BJ (cell line): ENCODE measurements at regions of chr3 and their contacts with region 1.

Region 1: DNA sequence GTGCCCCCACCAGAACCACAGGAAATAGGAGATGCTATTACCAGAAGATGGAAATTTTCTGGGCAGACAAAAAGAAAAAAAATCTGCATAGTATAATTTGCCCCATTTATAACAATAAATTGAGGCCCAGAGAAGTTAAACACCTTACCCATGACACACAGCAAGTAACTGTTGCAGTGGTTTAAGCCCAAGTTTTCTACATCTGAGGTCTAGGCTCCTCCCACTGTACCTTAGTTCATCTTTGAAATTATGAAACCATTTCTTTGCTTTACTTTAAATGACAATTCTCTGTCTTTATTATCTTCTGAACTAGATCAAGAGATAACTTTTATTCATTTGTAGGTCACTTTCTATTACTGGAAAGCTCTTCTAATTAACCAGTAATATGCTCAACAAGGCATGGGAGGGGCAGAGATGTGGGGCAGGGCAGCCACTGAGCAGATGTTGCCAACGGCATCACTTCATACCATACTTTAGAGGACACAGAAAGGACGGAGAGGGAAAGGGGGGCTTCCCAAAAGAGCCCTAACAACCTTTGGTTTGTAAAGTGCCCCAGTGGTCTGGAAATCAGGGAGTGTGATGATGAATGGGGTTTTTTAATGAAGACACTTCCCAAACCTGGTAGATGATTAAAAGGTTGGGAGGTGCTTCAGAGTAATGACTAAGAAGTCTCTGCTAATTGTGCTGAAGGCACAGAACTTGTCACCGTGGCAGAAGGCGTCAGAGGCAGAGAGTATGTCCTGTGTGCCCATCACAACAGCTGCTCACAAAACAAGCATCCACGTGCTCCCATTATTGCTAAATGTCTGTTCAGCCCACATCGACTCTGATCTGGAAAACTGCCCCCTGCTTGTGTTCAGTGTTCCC is 342.5 kb downstream of the SHQ1 start:
- DNase-seq: no peak
- H3K4me3 ChIP-seq: no peak overlapping the region
- H3K27me3 ChIP-seq: peaks cover 7% of the 10 kb centered on the region
- CTCF ChIP-seq: no peak

Region 2: DNA sequence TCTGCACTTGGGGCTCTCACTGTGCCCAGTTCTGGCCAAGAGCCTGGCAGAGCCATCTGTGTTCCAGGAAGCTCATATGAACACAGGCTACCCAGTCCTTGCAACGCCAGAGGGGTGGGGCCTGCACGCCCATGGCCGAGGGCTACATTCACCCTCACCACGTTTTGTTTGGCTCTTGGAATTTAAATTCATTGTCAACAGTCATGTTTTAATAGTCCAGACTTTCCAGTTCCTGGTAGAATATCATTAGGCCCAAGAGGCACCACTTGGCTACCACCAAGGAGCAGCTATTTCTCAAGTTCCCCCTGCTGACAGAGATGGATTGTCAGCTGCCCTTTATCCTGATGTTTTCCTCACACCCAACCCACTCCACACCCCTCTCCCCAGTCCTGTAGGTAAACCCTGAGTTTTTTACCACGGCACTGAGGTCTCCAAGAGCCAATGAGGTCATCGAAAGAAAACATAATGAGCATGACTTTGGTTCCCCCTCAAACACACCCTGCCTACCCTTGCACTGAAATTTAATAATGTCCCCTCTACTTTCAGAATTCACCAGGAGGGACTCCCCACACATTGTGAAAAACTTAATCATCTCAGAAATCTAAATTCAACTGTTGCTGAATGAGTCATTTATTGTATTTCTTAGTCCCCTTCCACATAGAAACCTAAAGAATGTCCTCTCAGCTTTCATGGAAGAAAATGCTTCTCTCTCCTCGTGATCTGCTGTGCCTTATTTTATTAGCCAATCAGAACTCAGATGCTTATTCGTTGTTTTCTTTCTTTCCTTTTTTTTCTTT is 217.4 kb after region 1 on chr3:
- CTCF ChIA-PET with region 1: no interaction called
- POLR2A ChIA-PET with region 1: interaction called, 11 read pairs
- DNase-seq: peak; percentile 26
- H3K4me3 ChIP-seq: no peak overlapping the region
- H3K27me3 ChIP-seq: no peaks in the 10 kb centered on the region
- CTCF ChIP-seq: no peak